Vagina (tissue), 2 donors: ENCODE measurements at regions of chr10 and their contacts with region 1.

Region 1: GRCh38 chr10:6401562-6402348 is 178.3 kb downstream of the PRKCQ start:
- DNase-seq: no peak
- H3K4me3 ChIP-seq: peak overlapping the region; percentile 30 to 33
- H3K27ac ChIP-seq: peak overlapping the region; percentile 42
- H3K4me1 ChIP-seq: peaks cover 6% of the 10 kb centered on the region
- H3K27me3 ChIP-seq: no peaks in the 10 kb centered on the region
- CTCF ChIP-seq: peak; percentile 67 to 86 (median 69)
- POLR2A ChIP-seq: no peak

Region 2: DNA sequence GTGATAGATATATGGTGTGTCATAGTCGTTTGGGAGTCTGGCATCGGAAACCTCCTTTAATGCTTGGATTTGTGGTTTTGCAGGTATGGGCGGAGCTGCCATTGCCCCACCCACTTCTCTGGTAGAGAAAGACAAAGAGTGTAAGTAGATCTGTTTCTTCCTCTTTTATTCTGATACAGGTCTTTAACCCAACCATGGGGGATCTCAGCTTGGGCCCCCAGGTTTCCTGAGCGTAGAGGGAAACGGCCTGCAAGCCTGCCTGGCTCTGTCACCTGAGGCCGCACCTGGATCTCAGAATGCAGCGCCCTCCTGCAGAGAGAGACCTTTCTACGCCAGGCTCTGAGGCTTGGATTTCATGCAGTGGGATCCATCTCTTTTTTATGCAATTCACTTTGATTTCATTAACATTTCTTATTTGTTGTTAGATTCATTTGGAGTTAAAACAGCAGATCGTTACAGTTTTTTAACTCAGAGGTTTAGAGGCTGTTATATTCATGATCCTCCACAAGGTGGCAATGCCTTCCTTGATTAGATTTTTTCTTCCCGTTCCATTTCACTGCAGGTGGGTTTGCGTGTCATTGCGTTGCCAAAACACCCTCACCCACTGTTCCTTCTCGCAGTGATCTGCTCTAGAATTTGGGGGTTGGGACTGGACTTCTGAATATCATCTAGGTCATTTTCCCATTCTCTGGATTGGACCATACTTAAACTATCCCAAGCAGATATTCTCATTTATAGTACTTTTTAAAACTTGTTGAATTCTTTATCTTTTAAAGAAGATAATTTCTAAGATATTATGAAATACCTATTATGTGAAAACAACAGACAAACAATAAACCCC is 292.9 kb before region 1 on chr10:
- intact Hi-C with region 1: loop called (anchors 5 kb)
- DNase-seq: no peak
- H3K4me3 ChIP-seq: no peak overlapping the region
- H3K27ac ChIP-seq: no peak overlapping the region
- H3K4me1 ChIP-seq: no peaks in the 10 kb centered on the region
- H3K27me3 ChIP-seq: no peaks in the 10 kb centered on the region
- CTCF ChIP-seq: peak; percentile 69 to 75 (median 71)
- POLR2A ChIP-seq: no peak